Dorsolateral prefrontal cortex (tissue), 120 donors: ENCODE measurements at regions of chr20 and their contacts with region 1.

Region 1: DNA sequence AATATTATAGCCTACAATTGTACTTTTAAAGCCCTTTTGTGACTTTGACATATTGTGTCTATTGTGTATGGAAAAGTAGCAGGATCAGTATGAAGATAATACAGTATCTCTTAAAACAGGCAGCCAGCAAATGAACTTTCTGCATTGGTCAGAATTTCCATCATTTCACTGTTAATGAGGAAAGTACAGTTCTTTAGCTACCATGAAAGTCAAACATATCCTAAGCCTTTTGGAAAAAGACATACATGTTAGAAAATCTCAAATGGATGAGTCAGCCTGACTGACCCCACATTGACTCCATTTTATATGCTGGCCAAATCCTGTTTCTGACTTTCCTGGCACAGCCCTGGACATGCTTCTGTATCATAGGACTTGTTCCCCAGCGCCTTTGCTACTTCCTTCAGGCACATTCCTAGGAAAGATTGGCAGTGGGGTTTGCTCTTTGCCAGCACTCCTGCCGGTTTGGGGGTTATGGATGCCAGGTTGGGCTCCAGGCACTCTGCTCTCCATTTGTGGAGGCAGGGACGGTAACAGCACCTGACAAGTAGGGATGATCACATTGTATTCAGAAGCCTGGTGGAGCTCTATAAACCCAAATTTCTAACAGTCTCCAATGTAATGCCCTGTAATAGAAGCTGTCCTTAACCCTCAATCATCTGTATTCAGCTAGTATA is 43.7 kb downstream of the TOP1 start:
- DNase-seq: peak in 1 of 10 donors; percentile 68
- H3K4me3 ChIP-seq: no peak overlapping the region
- H3K27ac ChIP-seq: peak overlapping the region in 7 of 59 donors; percentile 5 to 44 (median 22)
- H3K27me3 ChIP-seq: no peaks in the 10 kb centered on the region
- CTCF ChIP-seq: no peak

Region 2: DNA sequence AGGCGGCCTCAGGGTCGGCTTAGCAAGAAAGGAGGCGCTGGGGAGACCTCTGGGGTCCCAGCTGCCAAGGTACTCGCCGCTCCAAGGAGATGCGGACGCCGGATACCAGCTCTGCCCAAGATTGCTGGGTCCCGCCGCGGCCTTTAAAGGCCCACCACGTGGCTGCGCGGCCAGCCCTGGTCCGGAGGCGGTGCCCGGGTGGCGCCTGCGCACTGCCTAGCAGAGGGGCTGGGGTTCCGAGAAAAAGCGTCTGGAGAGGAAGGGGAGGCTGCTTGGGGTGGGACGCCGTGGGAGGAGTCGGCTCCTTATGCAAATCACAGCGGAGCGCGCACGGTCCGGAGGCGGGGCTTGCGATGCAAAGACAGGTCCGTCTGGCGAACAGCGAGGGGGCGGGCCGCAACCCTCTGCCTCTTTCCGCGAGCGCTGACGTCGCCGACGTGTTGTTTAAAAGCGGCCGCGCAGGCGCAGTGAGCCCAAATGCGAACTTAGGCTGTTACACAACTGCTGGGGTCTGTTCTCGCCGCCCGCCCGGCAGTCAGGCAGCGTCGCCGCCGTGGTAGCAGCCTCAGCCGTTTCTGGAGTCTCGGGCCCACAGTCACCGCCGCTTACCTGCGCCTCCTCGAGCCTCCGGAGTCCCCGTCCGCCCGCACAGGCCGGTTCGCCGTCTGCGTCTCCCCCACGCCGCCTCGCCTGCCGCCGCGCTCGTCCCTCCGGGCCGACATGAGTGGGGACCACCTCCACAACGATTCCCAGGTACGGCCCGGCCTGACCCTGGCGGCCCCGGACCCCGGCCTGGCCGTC is 43.8 kb before region 1 on chr20 and contains the start of gene TOP1:
- intact Hi-C with region 1: loop called in 1 of 2 experiments (anchors 5 kb)
- DNase-seq: peak; percentile 100
- H3K4me3 ChIP-seq: peak within 1 kb of the TSS; percentile 55 to 100 (median 95)
- H3K27ac ChIP-seq: peak within 1 kb of the TSS; percentile 51 to 99 (median 92)
- H3K27me3 ChIP-seq: no peaks in the 10 kb centered on the region
- CTCF ChIP-seq: peak in 39 of 56 donors; percentile 10 to 65 (median 29)
- total RNA-seq, gene TOP1: 26.8 to 49.2 (median 37.1) TPM